ENCODE measurements at regions of chr13 and their contacts with region 1.

Region 1: GRCh38 chr13:59677966-59678814 is 485.5 kb downstream of the DIAPH3 start:
- DNase-seq: peak; percentile 29
- ATAC-seq: peak; percentile 72
- H3K4me3 ChIP-seq: no peak overlapping the region
- H3K27ac ChIP-seq: no peak overlapping the region
- H3K4me1 ChIP-seq: no peaks in the 10 kb centered on the region
- H3K27me3 ChIP-seq: no peaks in the 10 kb centered on the region
- CTCF ChIP-seq: peak; percentile 16 to 75 (median 75); a peak in 5 of 6 replicates
- POLR2A ChIP-seq: no peak
- RAD21 ChIP-seq: peak; percentile 41; the same call in 1 of the 2 replicates

Region 2: GRCh38 chr13:59391696-59392095 is 286.5 kb before region 1 on chr13:
- CTCF ChIA-PET with region 1: no interaction called
- POLR2A ChIA-PET with region 1: no interaction called
- RAD21 ChIA-PET with region 1: no interaction called
- intact Hi-C with region 1: loop called (anchors 5 kb)
- DNase-seq: peak; percentile 16
- ATAC-seq: peak; percentile 77
- H3K4me3 ChIP-seq: no peak overlapping the region
- H3K27ac ChIP-seq: no peak overlapping the region
- H3K4me1 ChIP-seq: no peaks in the 10 kb centered on the region
- H3K27me3 ChIP-seq: no peaks in the 10 kb centered on the region
- CTCF ChIP-seq: peak; percentile 4 to 73 (median 69); a peak in 4 of 6 replicates
- POLR2A ChIP-seq: no peak
- RAD21 ChIP-seq: peak; percentile 33; the same call in 1 of the 2 replicates

Region 3: GRCh38 chr13:59771272-59771671 is 93.1 kb after region 1 on chr13:
- CTCF ChIA-PET with region 1: interaction called, 23 read pairs
- POLR2A ChIA-PET with region 1: no interaction called
- RAD21 ChIA-PET with region 1: interaction called in 1 of 2 experiments, 3 read pairs
- intact Hi-C with region 1: loop called (anchors 2 kb)
- DNase-seq: no peak
- ATAC-seq: no peak
- H3K4me3 ChIP-seq: no peak overlapping the region
- H3K27ac ChIP-seq: no peak overlapping the region
- H3K4me1 ChIP-seq: no peaks in the 10 kb centered on the region
- H3K27me3 ChIP-seq: no peaks in the 10 kb centered on the region
- CTCF ChIP-seq: peak; percentile 19 to 58 (median 51); a peak in 4 of 6 replicates
- POLR2A ChIP-seq: no peak
- RAD21 ChIP-seq: peak; percentile 38; the same call in 1 of the 2 replicates

Region 4: GRCh38 chr13:59906413-59907049 is 228.3 kb after region 1 on chr13:
- CTCF ChIA-PET with region 1: interaction called, 28 read pairs
- POLR2A ChIA-PET with region 1: no interaction called
- RAD21 ChIA-PET with region 1: interaction called in 1 of 2 experiments, 3 read pairs
- intact Hi-C with region 1: loop called (anchors 1 kb)
- DNase-seq: peak; percentile 4
- ATAC-seq: peak; percentile 53; the same call in 1 of the 2 replicates
- H3K4me3 ChIP-seq: no peak overlapping the region
- H3K27ac ChIP-seq: no peak overlapping the region
- H3K4me1 ChIP-seq: no peaks in the 10 kb centered on the region
- H3K27me3 ChIP-seq: no peaks in the 10 kb centered on the region
- CTCF ChIP-seq: peak in 2 of 3 experiments; percentile 54 to 57; a peak in 4 of 6 replicates
- POLR2A ChIP-seq: no peak
- RAD21 ChIP-seq: peak; percentile 53

Region 5: DNA sequence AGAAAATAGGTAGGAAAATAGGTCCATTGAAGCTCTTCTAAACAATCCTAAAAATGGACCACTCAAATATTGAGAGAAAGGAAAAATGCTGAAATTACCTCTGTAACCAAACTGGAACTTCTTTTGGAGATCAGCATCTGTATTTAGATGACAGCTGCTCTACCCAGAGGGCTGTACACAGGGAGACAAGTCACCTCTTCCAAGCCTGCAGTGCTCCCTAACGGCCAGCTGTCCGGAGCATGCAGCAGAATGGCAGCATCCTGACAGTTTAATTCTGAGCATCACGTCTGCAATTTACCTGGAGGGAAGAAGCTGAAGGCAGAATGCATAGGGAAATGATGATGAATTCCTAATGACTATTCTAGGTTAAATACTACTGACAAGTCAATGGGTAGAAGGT is 548.3 kb after region 1 on chr13:
- CTCF ChIA-PET with region 1: interaction called, 6 read pairs
- POLR2A ChIA-PET with region 1: no interaction called
- RAD21 ChIA-PET with region 1: no interaction called
- intact Hi-C with region 1: loop called (anchors 1 kb)
- DNase-seq: peak; percentile 12
- ATAC-seq: peak; percentile 93
- H3K4me3 ChIP-seq: no peak overlapping the region
- H3K27ac ChIP-seq: no peak overlapping the region
- H3K4me1 ChIP-seq: no peaks in the 10 kb centered on the region
- H3K27me3 ChIP-seq: peaks cover 23% of the 10 kb centered on the region
- CTCF ChIP-seq: peak in 2 of 3 experiments; percentile 38 to 57; a peak in 4 of 6 replicates
- POLR2A ChIP-seq: no peak
- RAD21 ChIP-seq: peak; percentile 53

Region 6: GRCh38 chr13:60329221-60329983 is 651.2 kb after region 1 on chr13:
- CTCF ChIA-PET with region 1: interaction called, 11 read pairs
- POLR2A ChIA-PET with region 1: no interaction called
- RAD21 ChIA-PET with region 1: no interaction called
- intact Hi-C with region 1: loop called (anchors 2 kb)
- DNase-seq: peak; percentile 18
- ATAC-seq: peak; percentile 86
- H3K4me3 ChIP-seq: no peak overlapping the region
- H3K27ac ChIP-seq: no peak overlapping the region
- H3K4me1 ChIP-seq: no peaks in the 10 kb centered on the region
- H3K27me3 ChIP-seq: peaks cover 9% of the 10 kb centered on the region; the same call in 1 of the 2 replicates
- CTCF ChIP-seq: peak; percentile 20 to 57 (median 39); a peak in 4 of 6 replicates
- POLR2A ChIP-seq: no peak
- RAD21 ChIP-seq: peak; percentile 60

Region 7: GRCh38 chr13:60431108-60431700 is 753.0 kb after region 1 on chr13:
- CTCF ChIA-PET with region 1: interaction called, 22 read pairs
- POLR2A ChIA-PET with region 1: no interaction called
- RAD21 ChIA-PET with region 1: no interaction called
- intact Hi-C with region 1: loop called (anchors 1 kb)
- DNase-seq: peak; percentile 46
- ATAC-seq: peak; percentile 79
- H3K4me3 ChIP-seq: no peak overlapping the region
- H3K27ac ChIP-seq: no peak overlapping the region
- H3K4me1 ChIP-seq: no peaks in the 10 kb centered on the region
- H3K27me3 ChIP-seq: no peaks in the 10 kb centered on the region
- CTCF ChIP-seq: peak; percentile 30 to 92 (median 76); a peak in 5 of 6 replicates
- POLR2A ChIP-seq: no peak
- RAD21 ChIP-seq: peak; percentile 68